Caco-2 (cell line): ENCODE measurements at regions of chr9 and their contacts with region 1.

Region 1: DNA sequence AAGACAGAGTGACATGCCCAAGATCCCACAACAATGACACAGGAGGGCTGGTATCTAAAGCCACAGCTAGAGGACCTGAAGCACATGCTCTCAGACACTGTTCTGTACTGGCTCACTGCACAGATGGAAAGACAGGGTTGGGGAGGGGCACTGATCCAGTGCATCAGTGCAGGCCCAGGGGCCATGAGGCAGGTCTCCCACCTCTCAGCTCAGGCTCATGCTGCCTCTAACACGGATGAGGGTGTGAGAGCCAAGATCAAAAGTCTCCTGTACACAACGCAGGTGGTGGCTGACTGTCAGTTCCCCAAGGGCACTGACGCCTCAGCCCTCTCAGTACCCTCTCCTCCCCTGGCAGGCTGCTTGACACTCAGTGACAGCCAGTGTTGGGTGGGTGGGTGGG is 10.9 kb downstream of the RAPGEF1 start:
- DNase-seq: no peak
- H3K4me3 ChIP-seq: no peak overlapping the region
- H3K4me3 Mint-ChIP-seq: no peak overlapping the region
- H3K27ac Mint-ChIP-seq: no peak overlapping the region
- H3K4me1 ChIP-seq: peaks cover 31% of the 10 kb centered on the region
- H3K4me1 Mint-ChIP-seq: peaks cover 24% of the 10 kb centered on the region
- H3K27me3 ChIP-seq: no peaks in the 10 kb centered on the region
- H3K27me3 Mint-ChIP-seq: no peaks in the 10 kb centered on the region
- CTCF ChIP-seq: no peak

Region 2: DNA sequence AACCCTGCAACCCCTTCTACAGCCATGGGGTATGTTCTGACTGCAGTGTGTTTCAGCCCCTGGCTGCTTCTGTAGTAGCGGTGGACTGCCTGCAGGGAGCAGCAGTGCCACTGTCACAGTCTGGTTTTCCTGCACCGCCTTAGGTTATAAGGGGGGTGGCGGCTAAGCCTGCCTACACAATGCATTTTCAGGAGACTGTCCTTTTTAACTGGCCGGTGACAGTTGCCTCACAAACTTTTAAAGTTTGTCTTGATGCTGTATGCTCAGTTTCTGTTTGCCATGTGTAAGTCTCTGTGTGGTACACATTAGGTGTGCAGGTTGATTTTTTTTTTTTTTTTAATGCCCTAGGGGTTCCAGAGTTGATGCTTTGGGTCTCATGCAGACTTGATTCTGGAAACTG is 550.6 kb before region 1 on chr9:
- CTCF ChIA-PET with region 1: no interaction called
- POLR2A ChIA-PET with region 1: no interaction called
- intact Hi-C with region 1: no loop called
- DNase-seq: peak; percentile 70 to 79
- H3K4me3 ChIP-seq: no peak overlapping the region
- H3K4me3 Mint-ChIP-seq: no peak overlapping the region
- H3K27ac Mint-ChIP-seq: no peak overlapping the region
- H3K4me1 ChIP-seq: no peaks in the 10 kb centered on the region; the same call in 1 of the 2 replicates
- H3K4me1 Mint-ChIP-seq: peaks cover 6% of the 10 kb centered on the region
- H3K27me3 ChIP-seq: no peaks in the 10 kb centered on the region
- H3K27me3 Mint-ChIP-seq: no peaks in the 10 kb centered on the region
- CTCF ChIP-seq: peak; percentile 85 to 87

Region 3: GRCh38 chr9:131635285-131635684 is 93.7 kb before region 1 on chr9:
- CTCF ChIA-PET with region 1: interaction called, 10 read pairs
- POLR2A ChIA-PET with region 1: no interaction called
- intact Hi-C with region 1: no loop called
- DNase-seq: peak; percentile 88 to 91
- H3K4me3 ChIP-seq: no peak overlapping the region
- H3K4me3 Mint-ChIP-seq: peak overlapping the region; percentile 11
- H3K27ac Mint-ChIP-seq: peak overlapping the region; percentile 69
- H3K4me1 ChIP-seq: peaks cover 15% of the 10 kb centered on the region
- H3K4me1 Mint-ChIP-seq: no peaks in the 10 kb centered on the region
- H3K27me3 ChIP-seq: no peaks in the 10 kb centered on the region
- H3K27me3 Mint-ChIP-seq: no peaks in the 10 kb centered on the region
- CTCF ChIP-seq: peak in 1 of 2 experiments; percentile 22

Region 4: GRCh38 chr9:131677444-131678180 is 51.3 kb before region 1 on chr9:
- CTCF ChIA-PET with region 1: interaction called, 5 read pairs
- POLR2A ChIA-PET with region 1: interaction called, 10 read pairs
- intact Hi-C with region 1: no loop called
- DNase-seq: no peak
- H3K4me3 ChIP-seq: no peak overlapping the region
- H3K4me3 Mint-ChIP-seq: no peak overlapping the region
- H3K27ac Mint-ChIP-seq: peak overlapping the region; percentile 56
- H3K4me1 ChIP-seq: peaks cover 21% of the 10 kb centered on the region
- H3K4me1 Mint-ChIP-seq: peaks cover 24% of the 10 kb centered on the region
- H3K27me3 ChIP-seq: no peaks in the 10 kb centered on the region
- H3K27me3 Mint-ChIP-seq: no peaks in the 10 kb centered on the region
- CTCF ChIP-seq: no peak

Region 5: DNA sequence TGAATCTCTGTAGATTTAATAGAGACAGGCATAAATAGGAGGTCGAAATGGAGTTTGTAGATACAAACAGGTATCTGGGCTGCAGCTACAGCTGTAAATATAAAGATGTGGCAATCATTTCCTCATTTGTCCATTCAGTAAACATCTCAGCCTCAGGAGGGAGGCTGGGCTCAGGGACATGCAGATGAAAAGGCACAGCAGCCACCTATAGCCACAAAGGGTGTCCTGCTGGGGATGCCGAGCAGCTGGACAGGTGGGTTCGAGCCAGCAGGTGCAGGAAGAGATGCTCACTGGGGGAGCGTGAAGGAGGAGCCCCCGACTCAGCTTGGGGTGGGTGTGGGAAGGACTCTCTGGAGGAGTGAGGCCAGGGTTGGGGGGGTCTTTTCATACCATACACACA is 59.4 kb after region 1 on chr9:
- CTCF ChIA-PET with region 1: no interaction called
- POLR2A ChIA-PET with region 1: no interaction called
- intact Hi-C with region 1: no loop called
- DNase-seq: no peak
- H3K4me3 ChIP-seq: no peak overlapping the region
- H3K4me3 Mint-ChIP-seq: no peak overlapping the region
- H3K27ac Mint-ChIP-seq: no peak overlapping the region
- H3K4me1 ChIP-seq: no peaks in the 10 kb centered on the region
- H3K4me1 Mint-ChIP-seq: no peaks in the 10 kb centered on the region
- H3K27me3 ChIP-seq: no peaks in the 10 kb centered on the region
- H3K27me3 Mint-ChIP-seq: peaks cover 22% of the 10 kb centered on the region
- CTCF ChIP-seq: no peak